Activated CD4-positive, alpha-beta memory T cell treated with anti-CD3 and anti-CD28 coated beads for 36 hours (primary cell): ENCODE measurements at regions of chr10 and their contacts with region 1.

Region 1: GRCh38 chr10:74826142-74827044 is at the start of gene KAT6B:
- DNase-seq: peak; percentile 100
- H3K4me3 Mint-ChIP-seq: peak within 1 kb of the TSS; percentile 89
- H3K27ac Mint-ChIP-seq: peak within 1 kb of the TSS; percentile 91
- H3K4me1 Mint-ChIP-seq: peaks cover 61% of the 10 kb centered on the region
- H3K27me3 Mint-ChIP-seq: no peaks in the 10 kb centered on the region
- total RNA-seq, gene KAT6B: 17.4 to 20.5 TPM

Region 2: GRCh38 chr10:73997787-73998622 is 828.4 kb before region 1 on chr10 and contains the start of gene VCL:
- CTCF ChIA-PET with region 1: no interaction called
- POLR2A ChIA-PET with region 1: no interaction called
- intact Hi-C with region 1: loop called (anchors 10 kb)
- DNase-seq: peak; percentile 97
- H3K4me3 Mint-ChIP-seq: peak within 1 kb of the TSS; percentile 91
- H3K27ac Mint-ChIP-seq: peak within 1 kb of the TSS; percentile 89
- H3K4me1 Mint-ChIP-seq: peaks cover 33% of the 10 kb centered on the region
- H3K27me3 Mint-ChIP-seq: no peaks in the 10 kb centered on the region
- total RNA-seq, gene VCL: 27.8 to 29.2 TPM

Region 3: GRCh38 chr10:74500816-74501215 is 325.6 kb before region 1 on chr10:
- CTCF ChIA-PET with region 1: no interaction called
- POLR2A ChIA-PET with region 1: no interaction called
- intact Hi-C with region 1: loop called (anchors 2 kb)
- DNase-seq: no peak
- H3K4me3 Mint-ChIP-seq: no peak overlapping the region
- H3K27ac Mint-ChIP-seq: no peak overlapping the region
- H3K4me1 Mint-ChIP-seq: peaks cover 46% of the 10 kb centered on the region
- H3K27me3 Mint-ChIP-seq: no peaks in the 10 kb centered on the region

Region 4: GRCh38 chr10:74612195-74612594 is 214.2 kb before region 1 on chr10:
- CTCF ChIA-PET with region 1: no interaction called
- POLR2A ChIA-PET with region 1: no interaction called
- intact Hi-C with region 1: no loop called
- DNase-seq: no peak
- H3K4me3 Mint-ChIP-seq: no peak overlapping the region
- H3K27ac Mint-ChIP-seq: no peak overlapping the region
- H3K4me1 Mint-ChIP-seq: peaks cover 2% of the 10 kb centered on the region
- H3K27me3 Mint-ChIP-seq: no peaks in the 10 kb centered on the region

Region 5: GRCh38 chr10:74799721-74800221 is 26.6 kb before region 1 on chr10:
- CTCF ChIA-PET with region 1: no interaction called
- POLR2A ChIA-PET with region 1: no interaction called
- intact Hi-C with region 1: loop called (anchors 1 kb)
- DNase-seq: peak; percentile 65
- H3K4me3 Mint-ChIP-seq: no peak overlapping the region
- H3K27ac Mint-ChIP-seq: peak overlapping the region; percentile 39
- H3K4me1 Mint-ChIP-seq: peaks cover 10% of the 10 kb centered on the region
- H3K27me3 Mint-ChIP-seq: no peaks in the 10 kb centered on the region

Region 6: GRCh38 chr10:74898201-74898976 is 72.0 kb after region 1 on chr10:
- CTCF ChIA-PET with region 1: no interaction called
- POLR2A ChIA-PET with region 1: interaction called, 3 read pairs
- intact Hi-C with region 1: loop called (anchors 1 kb)
- DNase-seq: peak; percentile 69
- H3K4me3 Mint-ChIP-seq: peak overlapping the region; percentile 10
- H3K27ac Mint-ChIP-seq: peak overlapping the region; percentile 84
- H3K4me1 Mint-ChIP-seq: peaks cover 55% of the 10 kb centered on the region
- H3K27me3 Mint-ChIP-seq: no peaks in the 10 kb centered on the region

Region 7: DNA sequence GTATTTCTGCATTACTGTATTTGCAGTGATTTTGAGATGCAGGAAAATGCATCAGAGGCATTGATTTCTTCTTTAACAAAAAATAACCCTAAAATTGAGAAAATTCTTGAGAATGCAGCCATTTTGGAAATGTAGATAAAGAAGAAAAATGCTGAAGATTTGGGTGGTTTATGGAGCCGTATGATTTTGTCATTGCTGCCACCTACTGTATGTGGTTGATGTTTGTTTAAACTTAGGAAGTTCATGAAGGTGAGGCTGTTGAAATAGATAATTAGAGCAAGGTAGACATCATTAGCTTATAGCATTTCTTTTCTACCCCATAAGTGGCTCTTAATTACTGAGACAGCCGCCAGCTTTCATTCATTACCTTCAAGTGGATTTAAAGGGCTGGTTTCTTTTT is 193.0 kb after region 1 on chr10:
- CTCF ChIA-PET with region 1: no interaction called
- POLR2A ChIA-PET with region 1: interaction called, 3 read pairs
- intact Hi-C with region 1: loop called (anchors 5 kb)
- DNase-seq: no peak
- H3K4me3 Mint-ChIP-seq: no peak overlapping the region
- H3K27ac Mint-ChIP-seq: no peak overlapping the region
- H3K4me1 Mint-ChIP-seq: peaks cover 18% of the 10 kb centered on the region
- H3K27me3 Mint-ChIP-seq: no peaks in the 10 kb centered on the region

Region 8: DNA sequence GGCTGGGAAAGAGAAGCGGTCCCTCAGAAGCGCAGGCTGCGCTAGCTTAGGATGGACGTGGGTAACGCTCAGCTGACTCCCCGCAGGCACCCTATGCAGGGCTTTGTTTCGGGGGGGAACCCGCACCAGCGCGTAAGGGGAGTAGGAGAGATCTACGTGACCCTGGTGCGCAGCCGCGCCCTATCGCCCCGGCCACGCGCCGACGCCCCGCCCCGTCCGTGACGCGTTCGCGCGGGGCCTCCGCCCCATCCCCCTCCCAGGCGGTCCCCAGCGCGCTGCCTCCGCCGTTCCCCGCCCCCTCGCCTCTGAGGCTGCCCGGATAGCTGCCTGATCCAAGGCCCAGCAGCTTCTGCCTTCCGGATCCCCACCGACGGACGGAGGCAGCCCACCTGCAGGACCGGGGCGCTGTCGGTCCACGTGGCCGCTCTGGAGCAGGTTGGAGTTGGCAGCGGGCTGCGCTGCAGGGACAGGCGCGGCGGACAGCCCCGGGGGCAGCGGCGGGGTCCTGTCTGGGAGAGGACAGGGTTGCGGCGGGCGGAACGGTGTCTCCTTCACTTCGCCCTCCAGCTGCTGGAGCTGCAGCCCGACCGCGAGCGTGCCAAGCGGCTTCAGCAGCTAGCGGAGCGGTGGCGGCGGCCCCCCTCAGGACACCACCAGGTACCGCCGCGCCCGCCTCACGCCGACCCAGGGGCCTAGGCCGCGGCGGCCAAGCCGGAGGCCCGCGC is 384.1 kb after region 1 on chr10 and contains the start of gene VDAC2:
- CTCF ChIA-PET with region 1: no interaction called
- POLR2A ChIA-PET with region 1: interaction called, 4 read pairs
- intact Hi-C with region 1: loop called (anchors 1 kb)
- DNase-seq: peak; percentile 95
- H3K4me3 Mint-ChIP-seq: peak within 1 kb of the TSS; percentile 89
- H3K27ac Mint-ChIP-seq: peak within 1 kb of the TSS; percentile 98
- H3K4me1 Mint-ChIP-seq: peaks cover 36% of the 10 kb centered on the region
- H3K27me3 Mint-ChIP-seq: no peaks in the 10 kb centered on the region
- total RNA-seq, gene VDAC2: 217 to 221 TPM